Aorta (tissue), 5 donors: ENCODE measurements at regions of chr6 and their contacts with region 1.

Region 1: GRCh38 chr6:166956444-166957086 is at the start of gene RNASET2:
- DNase-seq: peak; percentile 99 to 100
- ATAC-seq: peak; percentile 98
- H3K4me3 ChIP-seq: peak within 1 kb of the TSS; percentile 70 to 83
- H3K27ac ChIP-seq: peak within 1 kb of the TSS in 1 of 2 donors; percentile 45
- H3K4me1 ChIP-seq: peaks cover 0 to 1% of the 10 kb centered on the region in 2 donors
- H3K27me3 ChIP-seq: no peaks in the 10 kb centered on the region
- total RNA-seq, gene RNASET2: 23.3 to 64.8 TPM

Region 2: DNA sequence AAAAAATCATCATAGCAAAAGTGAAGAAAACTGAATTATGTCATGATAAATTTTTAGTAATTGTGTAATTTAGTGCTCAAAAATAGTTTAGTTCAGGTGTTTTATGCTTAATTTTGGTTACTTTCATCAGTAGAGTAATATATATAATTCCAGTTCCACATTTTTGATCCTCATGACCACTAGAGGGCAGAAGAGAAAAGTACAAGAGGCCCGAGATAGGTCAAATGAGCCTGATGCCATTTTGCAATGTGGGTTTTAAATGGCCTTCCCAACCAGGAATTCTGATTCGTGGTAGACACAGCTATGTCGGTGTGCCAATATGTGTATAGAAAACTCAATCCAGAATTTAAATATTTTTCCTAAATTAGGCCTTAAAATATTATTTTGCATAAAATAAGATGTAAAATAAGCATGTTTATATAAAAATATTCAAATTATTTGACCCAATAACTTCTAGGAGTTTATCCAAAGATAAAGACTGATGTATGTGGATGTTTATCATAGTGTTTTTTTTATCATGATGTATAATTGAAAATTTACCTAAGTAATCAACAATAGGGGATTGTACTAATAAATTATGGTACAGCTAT is 169.8 kb before region 1 on chr6:
- intact Hi-C with region 1: loop called in 1 of 2 experiments (anchors 10 kb)
- DNase-seq: no peak
- ATAC-seq: peak; percentile 71
- H3K4me3 ChIP-seq: no peak overlapping the region
- H3K27ac ChIP-seq: no peak overlapping the region
- H3K4me1 ChIP-seq: no peaks in the 10 kb centered on the region
- H3K27me3 ChIP-seq: no peaks in the 10 kb centered on the region